CD8-positive, alpha-beta memory T cell (primary cell): ENCODE measurements at regions of chr11 and their contacts with region 1.

Region 1: GRCh38 chr11:66677599-66678375 is at the start of gene RBM4B:
- DNase-seq: peak; percentile 95 to 98 (median 97)
- H3K4me3 ChIP-seq: peak within 1 kb of the TSS; percentile 99
- H3K4me3 Mint-ChIP-seq: peak within 1 kb of the TSS; percentile 90 to 99 (median 95)
- H3K27ac ChIP-seq: peak within 1 kb of the TSS; percentile 100
- H3K27ac Mint-ChIP-seq: peak within 1 kb of the TSS; percentile 98 to 100 (median 100)
- H3K4me1 ChIP-seq: peaks cover 43% of the 10 kb centered on the region
- H3K4me1 Mint-ChIP-seq: peaks cover 34 to 50% (median 42%) of the 10 kb centered on the region in 3 donors
- H3K27me3 ChIP-seq: no peaks in the 10 kb centered on the region
- H3K27me3 Mint-ChIP-seq: no peaks in the 10 kb centered on the region
- total RNA-seq, gene RBM4B: 19.5 to 20.0 TPM

Region 2: GRCh38 chr11:66408488-66409214 is 269.1 kb before region 1 on chr11:
- CTCF ChIA-PET with region 1: interaction called, 37 read pairs
- POLR2A ChIA-PET with region 1: interaction called, 3 read pairs
- DNase-seq: peak; percentile 82 to 92 (median 90)
- H3K4me3 ChIP-seq: peak overlapping the region; percentile 61
- H3K4me3 Mint-ChIP-seq: peak overlapping the region; percentile 21 to 90 (median 81)
- H3K27ac ChIP-seq: no peak overlapping the region
- H3K27ac Mint-ChIP-seq: peak overlapping the region in 5 of 8 donors; percentile 34 to 83 (median 64)
- H3K4me1 ChIP-seq: peaks cover 3% of the 10 kb centered on the region
- H3K4me1 Mint-ChIP-seq: peaks cover 2 to 5% (median 4%) of the 10 kb centered on the region in 3 donors
- H3K27me3 ChIP-seq: peaks cover 9% of the 10 kb centered on the region
- H3K27me3 Mint-ChIP-seq: peaks cover 24 to 52% of the 10 kb centered on the region in 2 donors

Region 3: DNA sequence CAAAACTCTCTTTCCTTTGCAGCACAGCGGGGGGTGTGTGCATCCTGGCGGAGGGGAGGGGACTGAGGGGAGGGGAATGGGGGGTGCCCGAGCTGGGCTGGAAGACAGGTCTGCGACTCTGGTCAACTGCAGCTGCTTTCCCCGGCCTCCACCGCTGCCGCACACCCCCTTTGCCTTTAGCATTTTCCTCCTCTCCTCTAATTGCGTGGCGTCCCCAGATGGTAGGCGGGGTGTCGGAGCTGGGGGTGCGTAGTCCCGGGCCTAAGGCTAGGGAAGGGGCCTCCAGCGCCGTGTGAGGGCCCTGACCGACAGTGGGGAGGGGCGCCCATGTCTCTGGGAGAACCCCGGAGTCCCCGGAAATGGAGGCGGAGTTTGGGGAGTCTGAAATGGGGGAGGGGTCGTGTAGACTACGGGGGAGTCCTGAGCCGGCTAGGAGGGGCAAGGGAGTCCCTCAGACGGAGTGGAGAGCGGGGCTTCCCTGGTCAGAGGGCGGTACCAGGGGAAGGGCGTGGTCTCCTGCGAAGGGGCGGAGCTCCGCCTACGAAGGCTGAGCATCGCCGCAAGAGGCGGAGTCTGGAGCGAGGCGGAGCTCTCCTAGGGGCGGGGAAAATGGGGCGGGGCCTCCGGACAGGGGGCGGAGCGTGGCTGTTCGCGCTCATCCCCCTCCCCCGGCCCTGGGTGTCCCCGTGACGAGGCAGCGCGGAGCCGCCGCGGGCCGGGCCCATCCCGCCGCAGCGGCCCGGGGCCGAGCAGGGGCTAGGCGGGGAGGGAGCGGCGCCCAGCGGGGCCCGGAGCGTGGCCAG is 211.4 kb before region 1 on chr11 and contains the start of gene PELI3:
- CTCF ChIA-PET with region 1: interaction called, 4 read pairs
- POLR2A ChIA-PET with region 1: interaction called, 10 read pairs
- DNase-seq: peak; percentile 91 to 97 (median 94)
- H3K4me3 ChIP-seq: peak within 1 kb of the TSS; percentile 78
- H3K4me3 Mint-ChIP-seq: peak within 1 kb of the TSS; percentile 87 to 97 (median 90)
- H3K27ac ChIP-seq: peak within 1 kb of the TSS; percentile 60
- H3K27ac Mint-ChIP-seq: peak within 1 kb of the TSS; percentile 88 to 98 (median 92)
- H3K4me1 ChIP-seq: peaks cover 11% of the 10 kb centered on the region
- H3K4me1 Mint-ChIP-seq: peaks cover 18 to 28% (median 20%) of the 10 kb centered on the region in 3 donors
- H3K27me3 ChIP-seq: no peaks in the 10 kb centered on the region
- H3K27me3 Mint-ChIP-seq: no peaks in the 10 kb centered on the region
- total RNA-seq, gene PELI3: 5.3 to 6.6 TPM

Region 4: DNA sequence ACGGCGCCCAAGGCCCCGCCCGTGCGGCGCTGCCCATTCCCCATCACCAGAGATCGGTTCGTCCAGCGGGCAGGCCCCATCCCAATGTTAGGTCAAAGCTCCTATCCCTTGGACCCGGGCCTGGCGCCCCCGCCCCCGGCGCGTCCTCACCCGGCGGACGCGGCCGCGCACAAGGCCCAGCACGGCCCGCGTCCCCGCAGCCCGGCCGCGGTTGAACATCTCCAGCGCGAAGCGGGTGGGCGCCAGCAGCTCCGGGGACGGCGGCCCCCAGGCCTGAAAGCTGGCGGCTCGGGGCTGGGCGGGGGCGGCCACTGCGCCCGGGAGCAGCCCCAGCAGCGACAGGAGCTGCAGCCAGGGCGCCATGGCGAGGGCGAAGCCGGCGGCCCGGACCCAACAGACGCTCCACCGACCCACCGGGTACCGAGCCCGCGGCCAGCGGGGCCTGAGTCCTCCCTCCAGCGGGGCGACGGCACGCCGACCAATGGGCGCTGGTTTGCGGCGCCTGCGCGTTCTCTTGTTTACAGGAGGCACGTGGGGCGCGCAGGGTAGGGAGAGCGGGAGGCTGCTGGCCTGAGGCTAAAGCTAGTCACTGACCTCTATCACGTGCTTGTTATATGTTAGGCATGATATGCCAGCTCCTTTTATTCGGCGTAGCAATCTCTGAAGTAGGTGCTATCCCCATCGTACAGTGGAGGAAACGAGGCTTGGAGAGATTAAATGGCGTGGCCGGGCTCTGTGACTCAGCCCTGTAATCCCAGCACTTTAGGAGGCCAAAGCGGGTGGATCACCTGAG is 109.5 kb before region 1 on chr11 and contains the start of gene CTSF:
- CTCF ChIA-PET with region 1: interaction called, 14 read pairs
- POLR2A ChIA-PET with region 1: interaction called, 7 read pairs
- DNase-seq: peak; percentile 46 to 81 (median 73)
- H3K4me3 ChIP-seq: peak within 1 kb of the TSS; percentile 41
- H3K4me3 Mint-ChIP-seq: peak within 1 kb of the TSS; percentile 45 to 83 (median 82)
- H3K27ac ChIP-seq: no peak within 1 kb of the TSS
- H3K27ac Mint-ChIP-seq: peak within 1 kb of the TSS in 4 of 8 donors; percentile 54 to 90 (median 88)
- H3K4me1 ChIP-seq: peaks cover 9% of the 10 kb centered on the region
- H3K4me1 Mint-ChIP-seq: peaks cover 4 to 15% (median 10%) of the 10 kb centered on the region in 3 donors
- H3K27me3 ChIP-seq: no peaks in the 10 kb centered on the region
- H3K27me3 Mint-ChIP-seq: peaks cover 5 to 11% of the 10 kb centered on the region in 2 donors
- total RNA-seq, gene CTSF: 5.6 to 6.0 TPM

Region 5: GRCh38 chr11:66592457-66593302 is 85.1 kb before region 1 on chr11 and contains the starts of genes CCDC87 and CCS:
- CTCF ChIA-PET with region 1: interaction called, 21 read pairs
- POLR2A ChIA-PET with region 1: interaction called, 19 read pairs
- DNase-seq: peak; percentile 96 to 100 (median 99)
- H3K4me3 ChIP-seq: peak within 1 kb of the TSS; percentile 96
- H3K4me3 Mint-ChIP-seq: peak within 1 kb of the TSS; percentile 84 to 100 (median 99)
- H3K27ac ChIP-seq: peak within 1 kb of the TSS; percentile 80
- H3K27ac Mint-ChIP-seq: peak within 1 kb of the TSS; percentile 81 to 100 (median 100)
- H3K4me1 ChIP-seq: peaks cover 25% of the 10 kb centered on the region
- H3K4me1 Mint-ChIP-seq: peaks cover 31 to 38% (median 37%) of the 10 kb centered on the region in 3 donors
- H3K27me3 ChIP-seq: no peaks in the 10 kb centered on the region
- H3K27me3 Mint-ChIP-seq: peaks cover 0 to 3% of the 10 kb centered on the region in 2 donors
- total RNA-seq, gene CCDC87: 0.20 to 0.27 TPM
- total RNA-seq, gene CCS: 24.1 to 25.7 TPM

Region 6: GRCh38 chr11:66653123-66653522 is 24.7 kb before region 1 on chr11:
- CTCF ChIA-PET with region 1: interaction called, 11 read pairs
- POLR2A ChIA-PET with region 1: no interaction called
- DNase-seq: no peak
- H3K4me3 ChIP-seq: no peak overlapping the region
- H3K4me3 Mint-ChIP-seq: peak overlapping the region in 1 of 7 donors; percentile 77
- H3K27ac ChIP-seq: no peak overlapping the region
- H3K27ac Mint-ChIP-seq: peak overlapping the region in 2 of 8 donors; percentile 42 to 46
- H3K4me1 ChIP-seq: peaks cover 9% of the 10 kb centered on the region
- H3K4me1 Mint-ChIP-seq: peaks cover 29 to 48% (median 36%) of the 10 kb centered on the region in 3 donors
- H3K27me3 ChIP-seq: no peaks in the 10 kb centered on the region
- H3K27me3 Mint-ChIP-seq: no peaks in the 10 kb centered on the region